ENCODE measurements at regions of chr19 and their contacts with region 1.

Region 1: GRCh38 chr19:39951686-39952085 is 17.3 kb upstream of the FCGBP start:
- DNase-seq: no peak
- H3K4me3 Mint-ChIP-seq: peak overlapping the region; percentile 70
- H3K27ac Mint-ChIP-seq: peak overlapping the region; percentile 90
- H3K4me1 Mint-ChIP-seq: peaks cover 39% of the 10 kb centered on the region
- H3K27me3 Mint-ChIP-seq: no peaks in the 10 kb centered on the region

Region 2: DNA sequence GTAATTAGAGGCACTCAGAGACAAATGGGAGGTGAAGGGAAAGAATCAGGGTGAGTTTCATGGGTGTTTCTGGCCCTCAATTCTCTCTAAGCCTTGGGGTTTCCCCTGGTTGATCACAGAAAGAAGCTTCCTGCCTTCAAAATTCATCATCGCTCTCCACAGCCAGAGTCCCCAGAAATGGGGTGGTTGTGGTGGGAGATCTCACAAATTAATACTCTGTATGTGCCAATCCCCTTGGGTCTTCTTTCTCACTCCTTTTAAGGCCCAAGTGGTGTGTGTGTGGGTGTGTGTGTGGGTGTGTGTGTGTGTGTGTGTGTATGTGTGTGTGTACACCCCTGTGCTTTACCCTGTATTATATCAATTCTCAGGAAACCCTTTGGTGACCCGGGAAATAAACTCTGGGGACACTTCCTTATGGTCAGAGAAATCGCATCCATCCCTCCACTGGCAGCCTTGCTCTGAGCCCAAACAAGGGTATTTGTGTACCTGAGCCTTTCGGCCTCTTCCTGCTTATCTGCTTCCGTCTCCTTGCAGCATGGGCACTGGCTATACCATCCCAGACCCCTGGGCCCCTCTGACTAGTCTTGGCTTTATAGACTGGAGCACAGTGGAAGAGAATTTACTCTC is 14.5 kb before region 1 on chr19:
- intact Hi-C with region 1: loop called (anchors 2 kb)
- DNase-seq: peak; percentile 85
- H3K4me3 Mint-ChIP-seq: peak overlapping the region; percentile 47
- H3K27ac Mint-ChIP-seq: peak overlapping the region; percentile 72
- H3K4me1 Mint-ChIP-seq: peaks cover 57% of the 10 kb centered on the region
- H3K27me3 Mint-ChIP-seq: peaks cover 2% of the 10 kb centered on the region